ENCODE measurements at regions of chrX and their contacts with region 1.

Region 1: GRCh38 chrX:19887911-19888879 is 795 bp upstream of the SH3KBP1 start:
- DNase-seq: peak; percentile 82
- H3K4me3 Mint-ChIP-seq: peak overlapping the region; percentile 82
- H3K27ac Mint-ChIP-seq: peak overlapping the region; percentile 82
- H3K4me1 Mint-ChIP-seq: peaks cover 27% of the 10 kb centered on the region
- H3K27me3 Mint-ChIP-seq: no peaks in the 10 kb centered on the region

Region 2: DNA sequence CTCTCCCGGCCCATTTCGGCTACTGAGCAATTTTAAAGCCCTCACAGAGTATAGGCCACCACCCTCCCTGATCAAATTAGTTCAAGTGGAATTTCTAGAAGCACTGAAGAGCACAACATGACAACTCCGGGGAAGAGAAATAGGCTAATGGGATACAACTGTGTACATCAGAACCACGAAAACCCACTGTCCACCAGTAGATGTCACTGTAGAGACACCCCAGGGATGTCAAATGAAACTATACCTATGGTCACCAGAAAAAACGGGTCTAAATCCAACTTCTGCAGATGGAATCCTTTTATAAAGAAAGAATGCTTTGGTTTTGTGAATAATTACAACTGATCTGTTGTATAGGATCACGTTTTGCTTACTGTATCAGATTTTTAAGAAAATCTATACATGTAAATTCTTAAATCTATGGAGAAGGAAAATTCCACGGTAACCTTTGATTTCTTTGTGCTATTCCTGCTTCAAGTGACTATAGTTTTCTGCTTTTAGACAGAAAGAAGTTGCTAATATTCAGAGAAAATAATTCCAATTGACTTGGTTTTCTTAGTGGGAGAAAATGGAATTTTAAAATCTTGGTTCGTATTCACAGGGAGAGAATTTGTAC is 343.4 kb before region 1 on chrX:
- intact Hi-C with region 1: loop called (anchors 2 kb)
- DNase-seq: peak; percentile 78
- H3K4me3 Mint-ChIP-seq: no peak overlapping the region
- H3K27ac Mint-ChIP-seq: peak overlapping the region; percentile 35
- H3K4me1 Mint-ChIP-seq: peaks cover 23% of the 10 kb centered on the region
- H3K27me3 Mint-ChIP-seq: no peaks in the 10 kb centered on the region

Region 3: DNA sequence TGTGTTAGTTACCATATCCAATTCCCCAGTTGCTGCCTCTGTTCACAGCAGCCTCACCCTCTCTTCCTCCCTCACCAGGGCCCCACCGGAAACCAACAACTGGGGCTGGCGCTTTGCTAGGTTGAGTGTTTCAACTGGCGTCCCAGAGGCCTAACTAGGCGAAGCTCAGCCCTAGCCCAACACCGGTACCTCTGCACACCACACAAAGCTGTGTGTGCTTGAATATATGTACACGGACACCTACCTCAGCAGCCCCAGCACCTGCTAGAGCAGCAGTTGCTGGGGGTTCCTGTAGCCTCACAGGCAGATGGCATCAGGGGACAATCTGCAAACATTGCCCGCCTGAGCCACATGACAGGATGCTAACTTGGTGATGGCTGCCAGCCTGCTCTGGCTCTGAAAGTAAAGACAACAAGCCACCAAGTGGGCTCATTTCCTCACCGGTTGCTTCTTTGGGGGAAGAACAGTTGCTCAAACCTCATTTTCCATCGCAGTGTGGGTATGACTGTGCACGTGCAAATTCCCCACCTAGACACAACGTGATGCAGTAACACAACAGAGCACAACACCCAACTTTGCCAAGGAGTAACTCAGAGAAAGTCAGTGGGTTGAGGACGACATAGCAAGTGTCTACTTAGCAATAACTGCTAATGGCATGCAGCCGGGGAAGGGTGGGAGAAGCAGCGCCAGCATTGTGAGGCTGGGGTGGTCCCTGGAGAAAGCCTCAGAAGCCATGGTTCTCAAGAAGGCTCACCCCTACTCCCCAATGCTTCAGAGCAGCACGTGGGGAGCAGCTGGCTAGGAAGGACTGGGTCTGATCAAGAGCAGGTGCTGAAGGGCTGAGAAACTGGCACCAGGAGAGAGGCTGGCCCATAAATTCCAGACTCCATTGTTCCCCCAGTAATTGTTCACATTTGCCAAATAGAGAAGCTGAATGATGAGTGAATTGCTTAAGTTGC is 140.3 kb before region 1 on chrX:
- intact Hi-C with region 1: loop called (anchors 2 kb)
- DNase-seq: peak; percentile 92
- H3K4me3 Mint-ChIP-seq: peak overlapping the region; percentile 68
- H3K27ac Mint-ChIP-seq: peak overlapping the region; percentile 97
- H3K4me1 Mint-ChIP-seq: peaks cover 72% of the 10 kb centered on the region
- H3K27me3 Mint-ChIP-seq: no peaks in the 10 kb centered on the region

Region 4: GRCh38 chrX:19840899-19841648 is 47.1 kb before region 1 on chrX:
- intact Hi-C with region 1: loop called (anchors 2 kb)
- DNase-seq: peak; percentile 85
- H3K4me3 Mint-ChIP-seq: peak overlapping the region; percentile 75
- H3K27ac Mint-ChIP-seq: peak overlapping the region; percentile 95
- H3K4me1 Mint-ChIP-seq: peaks cover 42% of the 10 kb centered on the region
- H3K27me3 Mint-ChIP-seq: no peaks in the 10 kb centered on the region

Region 5: DNA sequence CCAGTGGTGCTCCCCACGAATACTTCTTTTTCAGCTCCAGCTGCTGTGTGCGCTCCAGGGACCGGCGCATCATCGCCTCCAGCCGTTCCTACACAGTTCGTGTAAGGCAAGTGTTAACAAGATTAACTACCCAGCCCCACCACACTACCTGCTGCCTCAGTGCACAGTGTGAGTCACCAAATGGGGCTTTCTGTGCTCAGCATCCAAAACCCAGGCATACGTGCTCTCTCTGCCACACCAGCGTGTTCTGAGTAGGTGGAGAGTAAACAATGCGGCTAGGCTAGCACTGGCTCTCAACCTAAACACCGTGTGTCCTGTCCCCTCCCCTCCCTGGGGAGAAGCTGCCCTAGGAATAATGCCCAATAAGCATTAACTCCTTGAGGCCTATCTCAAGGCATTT is 168.5 kb after region 1 on chrX:
- intact Hi-C with region 1: no loop called
- DNase-seq: no peak
- H3K4me3 Mint-ChIP-seq: no peak overlapping the region
- H3K27ac Mint-ChIP-seq: no peak overlapping the region
- H3K4me1 Mint-ChIP-seq: peaks cover 4% of the 10 kb centered on the region
- H3K27me3 Mint-ChIP-seq: peaks cover 6% of the 10 kb centered on the region

Region 6: GRCh38 chrX:21590012-21590776 is 1702.0 kb after region 1 on chrX:
- intact Hi-C with region 1: no loop called
- DNase-seq: no peak
- H3K4me3 Mint-ChIP-seq: no peak overlapping the region
- H3K27ac Mint-ChIP-seq: no peak overlapping the region
- H3K4me1 Mint-ChIP-seq: peaks cover 4% of the 10 kb centered on the region
- H3K27me3 Mint-ChIP-seq: no peaks in the 10 kb centered on the region

Region 7: DNA sequence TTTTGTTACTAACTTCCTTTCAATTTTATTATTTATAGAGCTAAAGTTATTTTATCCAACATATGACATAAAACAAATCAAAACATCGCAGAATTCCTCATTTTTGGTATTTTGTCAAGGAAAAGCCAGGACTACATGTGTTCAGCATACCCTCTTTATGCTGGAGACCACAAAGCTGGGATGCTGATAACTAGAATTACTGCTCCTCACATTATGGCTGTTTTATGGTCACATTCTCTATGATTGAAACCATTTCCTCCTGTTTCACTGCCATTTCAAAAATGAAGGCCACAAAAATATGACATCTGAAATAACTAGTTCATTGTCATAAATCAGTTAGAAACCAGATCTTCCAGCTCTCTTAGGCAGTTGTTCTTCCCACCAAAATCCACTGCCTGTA is 1728.2 kb after region 1 on chrX:
- intact Hi-C with region 1: no loop called
- DNase-seq: no peak
- H3K4me3 Mint-ChIP-seq: no peak overlapping the region
- H3K27ac Mint-ChIP-seq: no peak overlapping the region
- H3K4me1 Mint-ChIP-seq: no peaks in the 10 kb centered on the region
- H3K27me3 Mint-ChIP-seq: no peaks in the 10 kb centered on the region

Measured in activated CD4-positive, alpha-beta T cell treated with anti-CD3 and anti-CD28 coated beads, Interleukin-2, amount 10 ng/mL, durations not matched to agents 24 days and 14 days (primary cell).